CD8-positive, alpha-beta T cell (primary cell): ENCODE measurements at regions of chr5 and their contacts with region 1.

Region 1: GRCh38 chr5:43556857-43557542 is at the start of gene PAIP1:
- DNase-seq: peak; percentile 67 to 92 (median 83)
- ATAC-seq: peak; percentile 81
- H3K4me3 ChIP-seq: peak within 1 kb of the TSS; percentile 73 to 88
- H3K4me3 Mint-ChIP-seq: peak within 1 kb of the TSS; percentile 90
- H3K27ac ChIP-seq: peak within 1 kb of the TSS; percentile 82 to 93
- H3K27ac Mint-ChIP-seq: peak within 1 kb of the TSS; percentile 97
- H3K4me1 ChIP-seq: peaks cover 45% of the 10 kb centered on the region
- H3K4me1 Mint-ChIP-seq: peaks cover 13% of the 10 kb centered on the region
- H3K27me3 ChIP-seq: no peaks in the 10 kb centered on the region
- H3K27me3 Mint-ChIP-seq: peaks cover 2% of the 10 kb centered on the region
- CTCF ChIP-seq: peak; percentile 77
- total RNA-seq, gene PAIP1: 40.3 to 45.7 TPM

Region 2: DNA sequence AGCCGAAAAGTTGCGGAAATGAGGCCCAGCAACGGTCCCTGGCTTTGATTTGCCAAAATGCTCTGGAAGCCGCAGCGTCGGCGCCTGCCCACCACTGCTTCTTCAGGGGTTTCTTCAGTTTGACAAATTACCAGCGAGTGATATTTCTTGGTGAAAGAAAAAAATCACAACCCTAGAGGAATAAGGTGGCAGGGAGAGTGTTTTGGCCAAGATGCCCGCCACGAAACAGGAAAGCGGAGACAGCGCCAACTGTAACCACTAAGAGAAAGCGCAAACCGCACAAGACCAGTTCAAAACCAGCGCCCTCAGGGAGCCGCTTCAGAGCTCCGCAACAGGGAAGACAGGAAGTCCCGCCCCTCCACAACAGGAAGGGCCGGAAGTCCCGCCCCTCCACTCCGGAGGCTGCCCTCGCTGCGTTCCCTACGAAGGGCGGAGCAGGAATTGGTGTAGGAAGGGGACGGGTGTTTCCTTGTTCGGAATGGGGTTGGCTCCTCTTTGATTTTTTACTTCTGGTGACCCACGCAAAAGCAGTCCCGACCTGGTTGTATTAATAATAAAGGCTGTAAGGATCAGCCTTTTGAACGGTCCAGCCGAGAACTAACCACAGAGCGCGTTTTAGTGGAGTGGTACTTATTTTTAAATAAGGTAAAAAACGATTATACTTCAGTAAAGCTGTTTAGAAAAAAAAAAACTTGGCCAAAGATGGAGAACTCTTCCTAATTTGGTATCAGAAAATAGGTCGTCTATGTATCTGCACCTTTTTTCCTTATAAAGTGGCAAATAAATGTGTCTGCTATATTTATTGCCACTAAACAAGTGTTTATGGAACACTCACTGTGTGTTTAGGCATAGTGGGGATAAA is 42.0 kb before region 1 on chr5 and contains the start of gene C5orf34:
- CTCF ChIA-PET with region 1: no interaction called
- POLR2A ChIA-PET with region 1: interaction called, 9 read pairs
- intact Hi-C with region 1: loop called (anchors 1 kb)
- DNase-seq: peak; percentile 84 to 97 (median 95)
- ATAC-seq: peak; percentile 86
- H3K4me3 ChIP-seq: peak within 1 kb of the TSS; percentile 68 to 77
- H3K4me3 Mint-ChIP-seq: peak within 1 kb of the TSS; percentile 97
- H3K27ac ChIP-seq: peak within 1 kb of the TSS; percentile 82
- H3K27ac Mint-ChIP-seq: peak within 1 kb of the TSS; percentile 95
- H3K4me1 ChIP-seq: peaks cover 15% of the 10 kb centered on the region
- H3K4me1 Mint-ChIP-seq: peaks cover 31% of the 10 kb centered on the region
- H3K27me3 ChIP-seq: no peaks in the 10 kb centered on the region
- H3K27me3 Mint-ChIP-seq: no peaks in the 10 kb centered on the region
- CTCF ChIP-seq: no peak
- total RNA-seq, gene C5orf34: 0.61 to 0.95 TPM

Region 3: DNA sequence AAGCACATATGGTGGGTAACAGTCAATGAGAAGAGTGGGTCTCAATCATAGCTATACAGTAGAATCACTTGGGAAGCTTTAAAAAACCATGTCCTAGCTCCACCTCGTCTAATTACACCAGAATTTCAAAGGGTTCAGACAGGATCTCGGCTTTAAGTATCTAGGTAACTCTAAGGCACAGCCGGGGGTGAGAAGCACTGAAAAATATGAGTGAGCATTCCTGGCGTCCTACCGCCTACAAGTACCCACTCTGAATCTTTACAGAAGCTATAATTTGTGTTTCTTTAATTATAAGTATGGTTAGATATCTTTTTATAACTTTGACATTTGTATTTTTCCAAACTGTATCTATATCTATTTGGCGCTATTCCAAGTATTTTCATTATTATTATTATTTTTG is 16.3 kb before region 1 on chr5:
- CTCF ChIA-PET with region 1: interaction called, 3 read pairs
- POLR2A ChIA-PET with region 1: interaction called, 11 read pairs
- intact Hi-C with region 1: no loop called
- DNase-seq: no peak
- ATAC-seq: no peak
- H3K4me3 ChIP-seq: no peak overlapping the region
- H3K4me3 Mint-ChIP-seq: no peak overlapping the region
- H3K27ac ChIP-seq: no peak overlapping the region
- H3K27ac Mint-ChIP-seq: no peak overlapping the region
- H3K4me1 ChIP-seq: no peaks in the 10 kb centered on the region
- H3K4me1 Mint-ChIP-seq: peaks cover 20% of the 10 kb centered on the region
- H3K27me3 ChIP-seq: no peaks in the 10 kb centered on the region
- H3K27me3 Mint-ChIP-seq: no peaks in the 10 kb centered on the region
- CTCF ChIP-seq: no peak

Region 4: DNA sequence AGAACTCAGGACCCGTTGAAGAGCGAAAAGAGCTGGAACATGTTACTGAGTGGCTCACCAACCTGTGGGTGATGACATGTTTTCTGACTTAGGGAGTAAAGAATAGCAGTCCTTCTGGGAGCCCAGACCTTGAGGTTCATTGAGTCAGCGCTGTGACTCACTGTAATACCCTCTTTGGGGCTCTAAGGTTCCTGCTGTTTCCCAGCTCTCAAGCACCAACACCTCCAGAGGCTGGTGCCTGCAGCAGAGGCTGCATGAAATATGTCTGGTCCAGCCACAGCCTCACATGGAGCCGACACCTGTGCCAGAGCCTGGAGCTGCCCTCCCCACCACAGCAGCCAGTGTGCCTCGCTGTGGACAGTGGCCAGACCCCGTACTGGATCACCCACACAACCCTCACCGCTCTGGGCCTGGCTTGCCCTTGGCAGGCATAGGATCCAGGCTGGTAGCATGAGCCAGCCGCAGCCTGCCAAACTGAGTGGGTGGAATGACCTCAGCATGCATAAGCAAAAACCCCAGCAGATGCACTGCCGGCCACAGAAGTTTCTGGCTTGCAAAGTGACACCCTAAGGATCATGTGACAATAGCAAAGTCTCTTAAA is 1108.2 kb after region 1 on chr5:
- CTCF ChIA-PET with region 1: no interaction called
- POLR2A ChIA-PET with region 1: no interaction called
- intact Hi-C with region 1: no loop called
- DNase-seq: no peak
- ATAC-seq: no peak
- H3K4me3 ChIP-seq: no peak overlapping the region
- H3K4me3 Mint-ChIP-seq: no peak overlapping the region
- H3K27ac ChIP-seq: no peak overlapping the region
- H3K27ac Mint-ChIP-seq: no peak overlapping the region
- H3K4me1 ChIP-seq: no peaks in the 10 kb centered on the region
- H3K4me1 Mint-ChIP-seq: no peaks in the 10 kb centered on the region
- H3K27me3 ChIP-seq: no peaks in the 10 kb centered on the region
- H3K27me3 Mint-ChIP-seq: no peaks in the 10 kb centered on the region
- CTCF ChIP-seq: no peak

Region 5: GRCh38 chr5:44808435-44809214 is 1251.6 kb after region 1 on chr5 and contains the start of gene MRPS30:
- CTCF ChIA-PET with region 1: no interaction called
- POLR2A ChIA-PET with region 1: no interaction called
- intact Hi-C with region 1: loop called in 1 of 2 experiments (anchors 1 kb)
- DNase-seq: peak; percentile 78 to 98 (median 89)
- ATAC-seq: peak; percentile 93
- H3K4me3 ChIP-seq: peak within 1 kb of the TSS; percentile 88 to 94
- H3K4me3 Mint-ChIP-seq: peak within 1 kb of the TSS; percentile 91
- H3K27ac ChIP-seq: peak within 1 kb of the TSS; percentile 88 to 89
- H3K27ac Mint-ChIP-seq: peak within 1 kb of the TSS; percentile 94
- H3K4me1 ChIP-seq: peaks cover 22% of the 10 kb centered on the region
- H3K4me1 Mint-ChIP-seq: peaks cover 36% of the 10 kb centered on the region
- H3K27me3 ChIP-seq: peaks cover 0 to 3% of the 10 kb centered on the region in 2 experiments
- H3K27me3 Mint-ChIP-seq: peaks cover 6% of the 10 kb centered on the region
- CTCF ChIP-seq: peak; percentile 48
- total RNA-seq, gene MRPS30: 51.5 to 52.4 TPM